Activated T-helper 2 cell treated with anti-CD3 and anti-CD28 coated beads, Interferon-gamma antibody, Interleukin-2, Interleukin-4, amounts not matched to agents 10 μg/mL and 5 μg/mL and 100 μg/mL, durations not matched to agents 14 hours and 24 hours and 36 hours (primary cell): ENCODE measurements at regions of chr10 and their contacts with region 1.

Region 1: DNA sequence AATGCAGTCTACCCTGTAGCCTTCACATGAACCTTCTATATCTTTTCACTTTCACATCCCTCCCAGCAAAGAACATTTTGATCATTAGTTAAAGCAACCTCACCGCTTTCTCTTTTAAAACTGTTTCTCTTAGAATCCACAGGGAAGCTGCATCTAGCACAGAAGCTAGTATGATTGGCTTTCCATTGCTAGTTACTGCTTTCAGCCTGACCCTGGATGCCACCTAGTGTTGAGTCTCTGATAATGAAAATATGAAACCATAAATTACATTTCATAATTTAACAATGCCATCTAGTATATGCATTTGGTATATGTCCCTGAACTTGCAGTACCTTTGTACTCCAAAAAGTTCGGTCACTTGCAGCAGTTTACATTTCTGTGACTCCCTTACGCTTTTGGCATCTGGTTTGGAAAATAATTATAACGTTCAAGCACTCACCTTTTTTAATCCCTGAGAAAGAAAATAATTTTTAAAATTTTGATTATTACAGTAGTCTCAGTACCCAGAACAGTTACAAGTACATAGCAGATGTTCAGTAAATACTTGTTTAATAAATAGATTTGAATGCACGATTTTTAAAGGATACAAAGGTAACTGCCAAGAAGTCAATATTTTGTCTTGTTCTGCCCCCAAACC is 22.7 kb downstream of the CISD1 start:
- DNase-seq: no peak
- H3K4me3 Mint-ChIP-seq: no peak overlapping the region
- H3K27ac Mint-ChIP-seq: no peak overlapping the region
- H3K4me1 Mint-ChIP-seq: peaks cover 1% of the 10 kb centered on the region
- H3K27me3 Mint-ChIP-seq: no peaks in the 10 kb centered on the region

Region 2: GRCh38 chr10:58177362-58177947 is 114.2 kb before region 1 on chr10:
- intact Hi-C with region 1: loop called (anchors 1 kb)
- DNase-seq: no peak
- H3K4me3 Mint-ChIP-seq: no peak overlapping the region
- H3K27ac Mint-ChIP-seq: no peak overlapping the region
- H3K4me1 Mint-ChIP-seq: no peaks in the 10 kb centered on the region
- H3K27me3 Mint-ChIP-seq: peaks cover 11% of the 10 kb centered on the region